ENCODE measurements at regions of chr11 and their contacts with region 1.

Region 1: GRCh38 chr11:18526521-18527296 is at the start of gene TSG101:
- DNase-seq: peak; percentile 94
- H3K4me3 Mint-ChIP-seq: peak within 1 kb of the TSS; percentile 100
- H3K27ac Mint-ChIP-seq: peak within 1 kb of the TSS; percentile 100
- H3K4me1 Mint-ChIP-seq: peaks cover 45% of the 10 kb centered on the region
- H3K27me3 Mint-ChIP-seq: no peaks in the 10 kb centered on the region
- total RNA-seq, gene TSG101: 33.2 to 40.5 TPM

Region 2: GRCh38 chr11:18105802-18106574 is 420.7 kb before region 1 on chr11 and contains the start of gene SAAL1:
- CTCF ChIA-PET with region 1: no interaction called
- intact Hi-C with region 1: loop called (anchors 2 kb)
- DNase-seq: peak; percentile 93
- H3K4me3 Mint-ChIP-seq: peak within 1 kb of the TSS; percentile 90
- H3K27ac Mint-ChIP-seq: peak within 1 kb of the TSS; percentile 83
- H3K4me1 Mint-ChIP-seq: peaks cover 34% of the 10 kb centered on the region
- H3K27me3 Mint-ChIP-seq: no peaks in the 10 kb centered on the region
- total RNA-seq, gene SAAL1: 36.4 to 37.0 TPM

Region 3: DNA sequence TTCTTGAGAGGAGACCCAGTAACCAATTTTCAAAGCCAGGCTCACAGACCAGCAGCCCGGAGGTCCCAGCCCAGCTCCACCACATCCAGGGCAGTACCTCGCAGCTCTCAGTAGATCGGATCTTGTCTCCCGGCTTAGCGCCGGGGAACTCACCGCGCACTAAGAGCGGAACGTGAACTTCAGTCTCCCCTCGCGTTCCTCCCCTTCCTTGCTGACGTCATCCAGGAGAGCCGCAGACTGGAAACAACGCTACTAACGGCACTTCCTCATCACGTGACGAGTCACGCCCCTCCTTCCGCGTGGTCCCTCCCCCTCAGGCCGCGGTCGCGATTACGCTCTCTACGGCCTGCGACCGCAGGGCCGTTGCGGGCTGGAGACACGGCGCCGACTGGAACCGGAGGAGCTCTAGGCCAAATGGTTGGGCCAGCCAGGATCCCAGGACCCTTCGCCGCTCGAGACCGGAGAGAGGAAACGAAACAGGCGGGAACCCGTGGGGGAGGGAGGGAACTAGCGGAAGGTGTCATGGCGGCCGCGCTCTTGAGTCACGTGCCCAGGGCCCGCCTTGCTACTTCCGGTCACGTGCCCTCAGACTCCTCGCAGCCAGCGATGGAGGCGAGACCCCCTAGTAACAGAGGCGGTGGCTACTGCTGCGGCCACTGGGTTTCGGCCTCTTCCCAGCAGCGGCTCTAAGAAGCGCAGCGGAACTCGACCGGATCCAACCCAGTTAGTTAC is 204.6 kb before region 1 on chr11 and contains the starts of genes GTF2H1 and HPS5:
- CTCF ChIA-PET with region 1: no interaction called
- intact Hi-C with region 1: loop called (anchors 1 kb)
- DNase-seq: peak; percentile 98
- H3K4me3 Mint-ChIP-seq: peak within 1 kb of the TSS; percentile 98
- H3K27ac Mint-ChIP-seq: peak within 1 kb of the TSS; percentile 100
- H3K4me1 Mint-ChIP-seq: peaks cover 64% of the 10 kb centered on the region
- H3K27me3 Mint-ChIP-seq: no peaks in the 10 kb centered on the region
- total RNA-seq, gene GTF2H1: 33.4 to 34.1 TPM
- total RNA-seq, gene HPS5: 21.7 to 21.9 TPM

Region 4: DNA sequence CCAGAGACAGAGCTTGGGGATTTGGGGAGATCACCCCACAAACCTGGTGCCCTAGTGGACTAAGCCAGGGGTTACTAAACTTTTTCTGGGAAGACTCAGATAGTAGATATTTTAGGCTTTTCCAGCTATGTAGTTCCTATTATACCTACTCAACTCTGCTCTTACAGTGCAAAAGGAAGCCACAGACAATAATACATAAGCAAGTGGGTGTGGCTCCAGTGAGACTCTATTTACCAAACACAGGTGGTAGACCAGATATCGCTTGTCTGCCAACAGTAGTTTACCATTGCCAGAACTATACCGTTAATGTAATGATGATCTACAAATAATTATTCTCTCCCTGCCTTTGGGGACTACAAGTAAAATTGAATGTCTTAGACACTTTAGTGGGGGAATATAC is 107.7 kb before region 1 on chr11:
- CTCF ChIA-PET with region 1: no interaction called
- intact Hi-C with region 1: no loop called
- DNase-seq: no peak
- H3K4me3 Mint-ChIP-seq: no peak overlapping the region
- H3K27ac Mint-ChIP-seq: no peak overlapping the region
- H3K4me1 Mint-ChIP-seq: peaks cover 10% of the 10 kb centered on the region
- H3K27me3 Mint-ChIP-seq: no peaks in the 10 kb centered on the region

Region 5: GRCh38 chr11:18492888-18493287 is 33.8 kb before region 1 on chr11:
- CTCF ChIA-PET with region 1: no interaction called
- intact Hi-C with region 1: no loop called
- DNase-seq: no peak
- H3K4me3 Mint-ChIP-seq: no peak overlapping the region
- H3K27ac Mint-ChIP-seq: no peak overlapping the region
- H3K4me1 Mint-ChIP-seq: no peaks in the 10 kb centered on the region
- H3K27me3 Mint-ChIP-seq: no peaks in the 10 kb centered on the region

Region 6: GRCh38 chr11:18588297-18589252 is 61.9 kb after region 1 on chr11 and contains the start of gene UEVLD:
- CTCF ChIA-PET with region 1: no interaction called
- intact Hi-C with region 1: loop called (anchors 1 kb)
- DNase-seq: peak; percentile 63
- H3K4me3 Mint-ChIP-seq: no peak within 1 kb of the TSS
- H3K27ac Mint-ChIP-seq: no peak within 1 kb of the TSS
- H3K4me1 Mint-ChIP-seq: peaks cover 8% of the 10 kb centered on the region
- H3K27me3 Mint-ChIP-seq: no peaks in the 10 kb centered on the region
- total RNA-seq, gene UEVLD: 8.9 to 9.2 TPM

Region 7: GRCh38 chr11:18634140-18635032 is 107.7 kb after region 1 on chr11 and contains the start of gene SPTY2D1:
- CTCF ChIA-PET with region 1: interaction called, 4 read pairs
- intact Hi-C with region 1: loop called (anchors 1 kb)
- DNase-seq: peak; percentile 99
- H3K4me3 Mint-ChIP-seq: peak within 1 kb of the TSS; percentile 87
- H3K27ac Mint-ChIP-seq: peak within 1 kb of the TSS; percentile 96
- H3K4me1 Mint-ChIP-seq: peaks cover 30% of the 10 kb centered on the region
- H3K27me3 Mint-ChIP-seq: no peaks in the 10 kb centered on the region
- total RNA-seq, gene SPTY2D1: 13.9 to 15.0 TPM